ENCODE measurements at regions of chr4 and their contacts with region 1.

Region 1: DNA sequence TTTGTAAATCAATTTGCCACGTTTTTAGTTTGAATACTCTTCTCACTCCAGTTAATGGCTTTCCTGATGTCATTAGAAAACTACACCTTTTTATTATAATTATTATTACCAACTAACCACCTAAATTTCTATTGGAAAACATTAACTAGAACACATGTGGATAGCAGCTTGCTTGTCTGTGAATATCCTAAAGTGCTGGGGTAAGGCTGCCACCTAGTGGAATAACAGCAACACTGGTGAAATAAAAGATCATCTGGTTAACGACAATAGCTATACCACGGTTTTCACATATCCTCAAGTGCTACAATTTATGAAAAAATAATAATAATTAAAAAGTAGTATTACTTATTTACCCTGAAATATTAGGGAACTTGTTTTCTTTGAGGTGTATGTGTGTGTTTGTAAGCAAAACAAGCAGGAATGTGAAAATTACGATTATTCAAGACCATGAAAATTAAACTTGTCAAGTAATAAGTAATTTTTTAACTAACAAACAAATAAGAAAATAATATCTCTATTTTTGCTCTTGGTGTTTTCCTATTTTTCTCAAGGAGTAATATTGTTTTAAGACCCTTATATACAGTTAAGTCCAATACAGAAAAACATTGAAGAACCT is 130.1 kb upstream of the TECRL start:
- DNase-seq: peak; percentile 61
- H3K4me3 ChIP-seq: no peak overlapping the region
- H3K27ac ChIP-seq: no peak overlapping the region
- H3K4me1 ChIP-seq: no peaks in the 10 kb centered on the region
- CTCF ChIP-seq: peak; percentile 90

Region 2: GRCh38 chr4:64158648-64159326 is 380.6 kb before region 1 on chr4:
- CTCF ChIA-PET with region 1: no interaction called
- POLR2A ChIA-PET with region 1: no interaction called
- intact Hi-C with region 1: loop called (anchors 2 kb)
- DNase-seq: peak; percentile 66
- H3K4me3 ChIP-seq: no peak overlapping the region
- H3K27ac ChIP-seq: no peak overlapping the region
- H3K4me1 ChIP-seq: no peaks in the 10 kb centered on the region
- CTCF ChIP-seq: peak; percentile 93

Region 3: DNA sequence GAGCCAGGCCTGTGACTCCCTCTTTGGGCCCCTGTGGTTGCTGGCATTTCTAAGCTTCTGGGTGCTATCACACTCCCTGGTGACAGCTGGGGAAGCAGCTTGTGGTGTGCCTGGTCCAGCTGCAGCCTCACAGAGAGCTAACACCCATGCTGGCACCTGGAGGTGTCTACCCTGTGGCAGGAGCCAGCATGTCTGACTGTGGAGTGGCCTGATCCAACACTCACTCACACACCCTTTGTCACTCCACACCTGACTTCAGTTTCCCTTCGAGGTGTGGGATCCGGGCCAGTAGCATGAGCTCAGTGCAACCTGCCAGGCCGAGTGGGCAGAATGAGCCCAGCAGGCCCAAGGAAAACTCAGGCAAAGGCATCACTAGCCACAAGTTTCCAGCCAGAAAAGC is 197.6 kb before region 1 on chr4:
- CTCF ChIA-PET with region 1: no interaction called
- POLR2A ChIA-PET with region 1: no interaction called
- intact Hi-C with region 1: no loop called
- DNase-seq: no peak
- H3K4me3 ChIP-seq: no peak overlapping the region
- H3K27ac ChIP-seq: no peak overlapping the region
- H3K4me1 ChIP-seq: no peaks in the 10 kb centered on the region
- CTCF ChIP-seq: no peak

Region 4: DNA sequence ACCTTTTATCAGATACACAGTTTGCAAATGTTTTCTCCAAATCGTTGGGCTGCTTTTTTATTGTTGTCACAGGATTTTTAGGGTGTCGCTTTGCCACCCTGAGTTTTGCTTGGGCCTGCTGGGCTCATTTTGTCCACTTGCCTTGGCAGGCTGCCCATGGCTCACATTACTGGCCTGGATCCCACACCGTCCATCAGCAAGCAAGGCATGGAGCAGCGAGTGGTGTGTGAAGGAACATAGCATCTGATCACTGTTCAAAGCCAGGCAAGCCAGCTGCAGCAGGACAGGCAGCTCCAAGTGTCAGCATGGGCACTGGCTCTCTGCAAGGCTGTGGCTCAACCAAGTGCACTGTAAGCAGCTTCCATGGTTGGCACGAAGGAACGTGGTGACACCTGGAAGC is 131.3 kb after region 1 on chr4:
- CTCF ChIA-PET with region 1: no interaction called
- POLR2A ChIA-PET with region 1: no interaction called
- intact Hi-C with region 1: no loop called
- DNase-seq: no peak
- H3K4me3 ChIP-seq: no peak overlapping the region
- H3K27ac ChIP-seq: no peak overlapping the region
- H3K4me1 ChIP-seq: no peaks in the 10 kb centered on the region
- CTCF ChIP-seq: no peak